Activated CD8-positive, alpha-beta T cell treated with anti-CD3 and anti-CD28 coated beads, Interleukin-2, amount 10 ng/mL, durations not matched to agents 7 days and 5 days (primary cell): ENCODE measurements at regions of chr22 and their contacts with region 1.

Region 1: GRCh38 chr22:17830043-17830961 is 56.0 kb upstream of the BID start:
- DNase-seq: peak; percentile 86
- ATAC-seq: peak; percentile 86
- H3K4me3 Mint-ChIP-seq: no peak overlapping the region
- H3K27ac Mint-ChIP-seq: no peak overlapping the region
- H3K4me1 Mint-ChIP-seq: peaks cover 5% of the 10 kb centered on the region
- H3K27me3 Mint-ChIP-seq: no peaks in the 10 kb centered on the region

Region 2: DNA sequence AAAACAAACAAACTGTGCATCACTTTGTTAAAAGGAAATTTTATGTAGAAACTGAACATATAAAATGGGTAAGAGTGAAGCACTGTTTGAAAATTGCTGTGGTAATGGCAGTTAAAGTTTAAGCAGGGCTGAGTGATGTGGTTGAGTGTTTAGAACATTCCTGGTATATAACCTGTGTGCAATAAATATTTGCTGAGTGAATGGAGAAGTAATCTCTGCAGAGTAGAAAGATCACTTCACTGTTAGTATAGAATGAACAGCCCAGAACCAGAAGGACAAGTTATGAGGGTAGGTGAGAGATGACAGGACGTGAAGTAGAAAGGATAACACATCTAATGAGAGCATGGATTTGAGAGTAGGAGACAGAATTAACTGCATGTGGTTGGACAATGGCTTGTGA is 433.8 kb before region 1 on chr22:
- CTCF ChIA-PET with region 1: no interaction called
- POLR2A ChIA-PET with region 1: no interaction called
- DNase-seq: no peak
- ATAC-seq: no peak
- H3K4me3 Mint-ChIP-seq: no peak overlapping the region
- H3K27ac Mint-ChIP-seq: no peak overlapping the region
- H3K4me1 Mint-ChIP-seq: no peaks in the 10 kb centered on the region
- H3K27me3 Mint-ChIP-seq: peaks cover 8% of the 10 kb centered on the region

Region 3: GRCh38 chr22:18024276-18024947 is 194.1 kb after region 1 on chr22 and contains the start of gene MICAL3:
- CTCF ChIA-PET with region 1: interaction called, 22 read pairs
- POLR2A ChIA-PET with region 1: interaction called, 3 read pairs
- DNase-seq: peak; percentile 66
- ATAC-seq: peak; percentile 95
- H3K4me3 Mint-ChIP-seq: peak within 1 kb of the TSS; percentile 83
- H3K27ac Mint-ChIP-seq: no peak within 1 kb of the TSS
- H3K4me1 Mint-ChIP-seq: peaks cover 14% of the 10 kb centered on the region
- H3K27me3 Mint-ChIP-seq: peaks cover 46% of the 10 kb centered on the region
- total RNA-seq, gene MICAL3: 26.4 to 29.7 TPM